B cell (primary cell): ENCODE measurements at regions of chr1 and their contacts with region 1.

Region 1: GRCh38 chr1:156480411-156481192 is 20.0 kb downstream of the MEF2D start:
- DNase-seq: peak; percentile 85
- ATAC-seq: peak; percentile 84
- H3K4me3 ChIP-seq: no peak overlapping the region
- H3K4me3 Mint-ChIP-seq: peak overlapping the region; percentile 70
- H3K27ac ChIP-seq: peak overlapping the region; percentile 60 to 72
- H3K27ac Mint-ChIP-seq: peak overlapping the region; percentile 93
- H3K4me1 ChIP-seq: peaks cover 16 to 41% of the 10 kb centered on the region in 2 donors
- H3K4me1 Mint-ChIP-seq: peaks cover 54% of the 10 kb centered on the region
- H3K27me3 ChIP-seq: no peaks in the 10 kb centered on the region
- H3K27me3 Mint-ChIP-seq: no peaks in the 10 kb centered on the region
- CTCF ChIP-seq: peak; percentile 81

Region 2: GRCh38 chr1:156461781-156462647 is 18.6 kb before region 1 on chr1:
- CTCF ChIA-PET with region 1: interaction called, 15 read pairs
- POLR2A ChIA-PET with region 1: no interaction called
- intact Hi-C with region 1: no loop called
- DNase-seq: no peak
- ATAC-seq: no peak
- H3K4me3 ChIP-seq: no peak overlapping the region
- H3K4me3 Mint-ChIP-seq: no peak overlapping the region
- H3K27ac ChIP-seq: peak overlapping the region in 1 of 2 donors; percentile 32
- H3K27ac Mint-ChIP-seq: peak overlapping the region; percentile 2
- H3K4me1 ChIP-seq: peaks cover 3 to 6% of the 10 kb centered on the region in 2 donors
- H3K4me1 Mint-ChIP-seq: peaks cover 14% of the 10 kb centered on the region
- H3K27me3 ChIP-seq: no peaks in the 10 kb centered on the region
- H3K27me3 Mint-ChIP-seq: no peaks in the 10 kb centered on the region
- CTCF ChIP-seq: no peak

Region 3: DNA sequence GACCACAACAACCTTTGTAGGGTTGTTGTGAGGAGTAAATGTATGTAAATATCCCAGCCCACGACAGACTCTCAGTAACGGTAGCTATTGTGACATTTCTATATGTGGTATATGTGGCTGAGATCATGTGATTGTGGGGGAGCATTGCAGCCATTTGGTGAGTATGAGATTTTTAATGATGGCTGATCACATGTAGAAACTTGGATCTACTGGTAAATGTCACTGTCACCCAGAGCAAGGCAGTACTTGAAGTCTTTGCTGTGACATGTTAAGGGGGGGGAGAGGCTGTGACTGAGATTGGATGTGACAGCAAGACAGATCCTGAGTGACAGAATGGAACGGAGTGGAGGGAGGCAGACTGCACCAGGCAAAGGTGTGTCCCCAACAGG is 43.9 kb after region 1 on chr1:
- CTCF ChIA-PET with region 1: interaction called, 26 read pairs
- POLR2A ChIA-PET with region 1: no interaction called
- intact Hi-C with region 1: loop called (anchors 5 kb)
- DNase-seq: peak; percentile 43
- ATAC-seq: peak; percentile 49
- H3K4me3 ChIP-seq: peak overlapping the region in 1 of 5 experiments; percentile 16
- H3K4me3 Mint-ChIP-seq: peak overlapping the region; percentile 71
- H3K27ac ChIP-seq: peak overlapping the region in 1 of 2 donors; percentile 49
- H3K27ac Mint-ChIP-seq: peak overlapping the region; percentile 64
- H3K4me1 ChIP-seq: peaks cover 20 to 24% of the 10 kb centered on the region in 2 donors
- H3K4me1 Mint-ChIP-seq: peaks cover 23% of the 10 kb centered on the region
- H3K27me3 ChIP-seq: no peaks in the 10 kb centered on the region
- H3K27me3 Mint-ChIP-seq: no peaks in the 10 kb centered on the region
- CTCF ChIP-seq: no peak

Region 4: DNA sequence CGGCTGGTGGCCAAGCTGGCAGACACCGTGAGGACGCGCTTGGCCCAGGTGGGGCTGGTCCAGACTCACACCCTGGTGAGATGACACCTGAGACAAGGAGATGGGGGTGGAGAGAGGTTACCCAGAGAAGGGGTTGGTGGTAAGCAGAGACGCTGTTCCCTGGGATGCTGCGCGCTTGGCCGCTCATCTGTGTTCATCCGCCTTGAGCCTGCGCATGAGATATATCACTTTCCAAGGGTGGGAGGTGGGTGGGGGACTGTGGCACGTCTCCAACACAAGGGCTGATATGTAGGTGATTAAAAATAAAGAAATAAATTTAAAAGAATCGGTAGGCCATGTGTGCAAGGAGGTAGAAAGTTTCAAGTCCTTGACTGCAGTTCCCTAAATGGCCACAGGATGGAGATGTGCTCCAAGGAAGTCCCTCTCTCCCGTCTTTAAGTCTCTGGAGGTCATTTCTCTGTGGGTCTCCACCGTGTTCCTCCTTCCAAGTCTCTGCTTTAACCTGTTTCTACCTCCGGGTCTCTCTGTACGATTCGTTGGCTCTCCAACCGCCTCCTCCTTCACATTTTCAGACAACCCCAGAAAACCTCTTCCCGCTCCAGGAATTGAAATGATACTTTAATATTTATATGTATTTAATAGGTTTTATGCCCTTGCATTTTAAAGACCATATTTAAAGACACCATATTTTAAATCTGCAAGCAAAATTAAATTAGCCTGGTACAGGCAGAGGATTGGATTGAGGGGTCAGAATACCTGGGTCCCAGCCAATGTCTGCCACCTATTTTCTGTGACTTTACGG is 103.4 kb after region 1 on chr1:
- CTCF ChIA-PET with region 1: interaction called, 48 read pairs
- POLR2A ChIA-PET with region 1: interaction called, 10 read pairs
- intact Hi-C with region 1: loop called (anchors 2 kb)
- DNase-seq: peak; percentile 88
- ATAC-seq: peak; percentile 60
- H3K4me3 ChIP-seq: peak overlapping the region in 1 of 5 experiments; percentile 64
- H3K4me3 Mint-ChIP-seq: peak overlapping the region; percentile 15
- H3K27ac ChIP-seq: peak overlapping the region; percentile 88 to 94
- H3K27ac Mint-ChIP-seq: peak overlapping the region; percentile 76
- H3K4me1 ChIP-seq: peaks cover 26 to 36% of the 10 kb centered on the region in 2 donors
- H3K4me1 Mint-ChIP-seq: peaks cover 32% of the 10 kb centered on the region
- H3K27me3 ChIP-seq: no peaks in the 10 kb centered on the region
- H3K27me3 Mint-ChIP-seq: no peaks in the 10 kb centered on the region
- CTCF ChIP-seq: peak; percentile 94

Region 5: GRCh38 chr1:156625436-156626078 is 145.0 kb after region 1 on chr1:
- CTCF ChIA-PET with region 1: interaction called, 12 read pairs
- POLR2A ChIA-PET with region 1: no interaction called
- intact Hi-C with region 1: no loop called
- DNase-seq: peak; percentile 86
- ATAC-seq: peak; percentile 75
- H3K4me3 ChIP-seq: peak overlapping the region in 4 of 5 experiments; percentile 19 to 50 (median 47)
- H3K4me3 Mint-ChIP-seq: peak overlapping the region; percentile 84
- H3K27ac ChIP-seq: no peak overlapping the region
- H3K27ac Mint-ChIP-seq: peak overlapping the region; percentile 2
- H3K4me1 ChIP-seq: peaks cover 22 to 26% of the 10 kb centered on the region in 2 donors
- H3K4me1 Mint-ChIP-seq: peaks cover 15% of the 10 kb centered on the region
- H3K27me3 ChIP-seq: peaks cover 2 to 66% (median 27%) of the 10 kb centered on the region in 4 experiments
- H3K27me3 Mint-ChIP-seq: peaks cover 49% of the 10 kb centered on the region
- CTCF ChIP-seq: peak; percentile 91